MCF 10A (cell line): ENCODE measurements at regions of chr17 and their contacts with region 1.

Region 1: DNA sequence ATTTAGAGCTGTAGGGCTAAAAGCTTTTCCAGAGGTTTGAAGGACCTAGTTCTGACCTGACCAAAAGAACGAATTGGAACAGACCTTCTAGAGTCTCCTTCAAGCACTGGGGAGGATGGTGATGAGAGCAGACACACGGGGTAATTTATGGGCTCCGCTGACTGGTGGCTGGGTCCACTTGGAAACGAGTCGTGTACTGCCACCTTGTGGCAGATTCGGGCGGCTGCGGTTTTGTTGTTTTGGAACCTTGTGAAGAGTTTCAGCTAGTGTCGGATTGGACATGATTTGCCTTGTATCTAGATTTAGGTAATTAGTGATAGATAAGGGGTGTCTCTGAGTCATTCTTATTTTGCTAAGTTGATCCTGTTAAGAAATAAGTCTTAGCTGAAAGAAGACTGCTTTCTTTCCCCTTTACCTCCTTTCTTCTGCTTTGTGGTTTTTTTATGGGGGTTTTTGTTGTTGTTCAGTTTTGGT is 98.9 kb downstream of the AATF start:
- DNase-seq: peak; percentile 81
- H3K4me3 Mint-ChIP-seq: no peak overlapping the region
- H3K27ac Mint-ChIP-seq: no peak overlapping the region
- H3K4me1 Mint-ChIP-seq: peaks cover 7% of the 10 kb centered on the region
- H3K27me3 Mint-ChIP-seq: no peaks in the 10 kb centered on the region
- CTCF ChIP-seq: peak; percentile 70

Region 2: GRCh38 chr17:36629252-36629847 is 418.3 kb before region 1 on chr17:
- CTCF ChIA-PET with region 1: interaction called, 64 read pairs
- POLR2A ChIA-PET with region 1: interaction called, 3 read pairs
- intact Hi-C with region 1: loop called (anchors 1 kb)
- DNase-seq: peak; percentile 70
- H3K4me3 Mint-ChIP-seq: no peak overlapping the region
- H3K27ac Mint-ChIP-seq: no peak overlapping the region
- H3K4me1 Mint-ChIP-seq: no peaks in the 10 kb centered on the region
- H3K27me3 Mint-ChIP-seq: peaks cover 34% of the 10 kb centered on the region
- CTCF ChIP-seq: peak; percentile 99

Region 3: GRCh38 chr17:36705874-36706731 is 341.6 kb before region 1 on chr17:
- CTCF ChIA-PET with region 1: interaction called, 6 read pairs
- POLR2A ChIA-PET with region 1: no interaction called
- intact Hi-C with region 1: loop called (anchors 1 kb)
- DNase-seq: peak; percentile 58
- H3K4me3 Mint-ChIP-seq: no peak overlapping the region
- H3K27ac Mint-ChIP-seq: no peak overlapping the region
- H3K4me1 Mint-ChIP-seq: peaks cover 5% of the 10 kb centered on the region
- H3K27me3 Mint-ChIP-seq: peaks cover 50% of the 10 kb centered on the region
- CTCF ChIP-seq: peak; percentile 76

Region 4: DNA sequence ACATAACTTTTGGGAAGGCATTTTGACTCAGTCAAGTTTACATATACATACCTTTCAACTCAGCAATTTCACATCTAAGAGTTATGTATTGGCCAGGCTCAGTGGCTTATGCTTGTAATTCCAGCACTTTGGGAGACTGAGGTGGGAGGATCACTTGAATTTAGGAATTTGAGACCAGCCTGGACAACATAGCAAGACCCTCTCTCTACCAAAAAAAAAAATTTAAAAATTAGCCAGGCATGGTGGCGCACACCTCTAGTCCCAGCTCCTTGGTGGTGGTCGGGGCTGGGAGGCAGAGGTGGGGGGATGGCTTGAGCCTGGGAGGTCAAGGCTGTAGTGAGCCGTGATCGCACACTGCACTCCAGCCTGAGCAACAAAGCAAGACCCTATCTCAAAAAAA is 19.6 kb before region 1 on chr17:
- CTCF ChIA-PET with region 1: interaction called, 10 read pairs
- POLR2A ChIA-PET with region 1: no interaction called
- intact Hi-C with region 1: no loop called
- DNase-seq: no peak
- H3K4me3 Mint-ChIP-seq: no peak overlapping the region
- H3K27ac Mint-ChIP-seq: no peak overlapping the region
- H3K4me1 Mint-ChIP-seq: no peaks in the 10 kb centered on the region
- H3K27me3 Mint-ChIP-seq: no peaks in the 10 kb centered on the region
- CTCF ChIP-seq: no peak

Region 5: GRCh38 chr17:37067555-37068111 is 20.0 kb after region 1 on chr17:
- CTCF ChIA-PET with region 1: interaction called, 13 read pairs
- POLR2A ChIA-PET with region 1: no interaction called
- intact Hi-C with region 1: no loop called
- DNase-seq: peak; percentile 90
- H3K4me3 Mint-ChIP-seq: no peak overlapping the region
- H3K27ac Mint-ChIP-seq: peak overlapping the region; percentile 25
- H3K4me1 Mint-ChIP-seq: peaks cover 15% of the 10 kb centered on the region
- H3K27me3 Mint-ChIP-seq: peaks cover 12% of the 10 kb centered on the region
- CTCF ChIP-seq: no peak

Region 6: GRCh38 chr17:37109731-37110710 is 62.4 kb after region 1 on chr17:
- CTCF ChIA-PET with region 1: no interaction called
- POLR2A ChIA-PET with region 1: no interaction called
- intact Hi-C with region 1: no loop called
- DNase-seq: no peak
- H3K4me3 Mint-ChIP-seq: no peak overlapping the region
- H3K27ac Mint-ChIP-seq: no peak overlapping the region
- H3K4me1 Mint-ChIP-seq: peaks cover 11% of the 10 kb centered on the region
- H3K27me3 Mint-ChIP-seq: no peaks in the 10 kb centered on the region
- CTCF ChIP-seq: no peak

Region 7: DNA sequence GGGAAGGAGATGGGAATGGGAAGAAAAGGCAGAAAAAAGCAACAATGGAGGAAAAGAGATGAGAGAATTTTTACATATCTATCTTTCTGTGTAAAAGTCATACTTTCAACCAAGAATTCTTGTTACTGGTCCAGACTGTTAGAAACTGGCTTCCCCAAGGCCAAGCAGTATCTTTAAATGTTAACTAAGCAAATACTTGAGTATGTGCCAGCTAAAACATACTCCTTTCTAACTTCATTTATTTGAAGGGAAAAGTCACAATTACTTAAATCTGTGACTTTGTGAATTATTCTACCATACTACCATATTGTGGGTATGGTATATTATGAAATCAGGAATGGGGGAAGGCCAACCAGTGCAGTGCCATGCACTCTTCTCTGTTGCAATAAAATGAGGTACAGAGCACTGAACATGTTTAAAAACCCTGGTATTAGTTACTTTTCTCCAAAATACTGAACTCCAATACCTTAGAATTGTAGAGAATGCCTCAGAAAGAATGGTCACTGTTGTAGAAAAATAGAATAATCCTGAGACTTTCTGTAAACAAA is 235.8 kb after region 1 on chr17:
- CTCF ChIA-PET with region 1: no interaction called
- POLR2A ChIA-PET with region 1: no interaction called
- intact Hi-C with region 1: no loop called
- DNase-seq: no peak
- H3K4me3 Mint-ChIP-seq: no peak overlapping the region
- H3K27ac Mint-ChIP-seq: no peak overlapping the region
- H3K4me1 Mint-ChIP-seq: no peaks in the 10 kb centered on the region
- H3K27me3 Mint-ChIP-seq: no peaks in the 10 kb centered on the region
- CTCF ChIP-seq: no peak